Endothelial cell of umbilical vein (primary cell): ENCODE measurements at regions of chr7 and their contacts with region 1.

Region 1: DNA sequence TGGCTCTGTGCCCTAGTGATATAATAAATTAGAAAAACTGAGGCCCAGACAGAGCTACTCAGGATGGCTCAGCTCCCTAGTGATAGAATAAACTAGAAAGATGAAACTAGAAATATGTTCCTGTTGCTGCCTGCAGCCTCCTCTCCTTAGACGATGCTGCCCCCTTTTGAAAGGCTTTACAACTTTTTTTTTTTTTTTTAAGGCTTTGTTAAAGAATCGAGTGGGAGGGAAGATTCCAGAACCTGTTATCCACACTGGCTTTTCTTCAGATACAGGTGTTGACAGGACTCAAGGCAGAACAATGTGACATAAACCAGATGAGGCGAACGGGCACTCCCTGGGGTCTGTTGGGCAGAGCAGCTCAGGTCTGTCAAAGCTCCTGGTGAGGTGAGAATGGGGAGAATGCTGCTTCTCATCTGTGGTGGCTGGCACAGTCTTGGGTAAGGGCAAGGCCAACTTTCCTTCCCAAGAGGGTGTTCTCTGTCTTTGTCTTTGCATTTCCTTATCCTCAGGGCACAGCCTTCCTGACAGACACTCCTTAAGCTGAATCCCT is 175.1 kb downstream of the COBL start:
- DNase-seq: peak; percentile 81
- H3K4me3 ChIP-seq: no peak overlapping the region
- H3K27ac ChIP-seq: no peak overlapping the region
- H3K4me1 ChIP-seq: peaks cover 27% of the 10 kb centered on the region
- H3K27me3 ChIP-seq: peaks cover 0 to 2% of the 10 kb centered on the region in 2 experiments
- CTCF ChIP-seq: peak; percentile 48 to 60
- POLR2A ChIP-seq: no peak

Region 2: DNA sequence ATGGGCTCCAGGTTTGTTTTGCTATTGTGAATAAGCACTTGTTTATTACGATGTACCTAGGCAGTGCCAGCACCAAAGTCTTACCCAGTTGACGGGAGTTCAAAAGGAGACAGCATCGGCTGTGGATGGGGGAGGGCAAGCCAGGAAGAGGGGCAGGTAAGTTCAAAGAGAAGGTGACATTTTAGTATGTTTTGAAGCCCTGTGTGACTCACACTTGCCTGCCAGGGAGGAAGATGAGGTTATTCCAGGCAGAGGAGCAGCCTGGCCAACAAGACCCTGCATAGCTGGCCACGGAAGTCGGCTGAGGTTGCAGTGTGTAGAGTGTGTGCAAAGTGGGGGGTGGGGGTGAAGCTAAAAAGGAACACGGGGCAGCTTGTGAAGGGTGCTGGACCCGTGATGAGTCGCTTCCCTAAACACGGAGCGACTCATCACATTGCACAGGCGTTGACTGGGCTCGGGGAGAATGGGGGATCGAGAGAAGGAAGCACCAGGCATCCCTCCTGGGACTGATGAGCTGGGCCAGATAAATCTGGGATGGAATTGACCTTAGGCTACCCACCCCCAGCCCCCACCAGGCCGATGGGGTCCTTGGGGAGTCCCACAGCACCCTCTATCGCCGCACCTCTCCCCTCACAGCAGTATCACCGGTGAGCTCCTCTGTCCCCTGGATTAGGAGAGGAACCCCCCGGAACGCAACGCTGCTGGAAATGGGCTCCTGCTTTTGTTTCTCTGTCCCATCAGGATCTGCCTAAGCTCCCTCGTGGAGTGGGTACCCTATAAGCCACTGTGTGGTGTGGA is 934.9 kb before region 1 on chr7:
- CTCF ChIA-PET with region 1: interaction called, 58 read pairs
- POLR2A ChIA-PET with region 1: no interaction called
- dilution Hi-C with region 1: no loop called
- intact Hi-C with region 1: loop called (anchors 1 kb)
- DNase-seq: no peak
- H3K4me3 ChIP-seq: no peak overlapping the region
- H3K27ac ChIP-seq: no peak overlapping the region
- H3K4me1 ChIP-seq: no peaks in the 10 kb centered on the region
- H3K27me3 ChIP-seq: no peaks in the 10 kb centered on the region
- CTCF ChIP-seq: no peak
- POLR2A ChIP-seq: no peak

Region 3: GRCh38 chr7:50588937-50589336 is 552.6 kb before region 1 on chr7:
- CTCF ChIA-PET with region 1: interaction called, 17 read pairs
- POLR2A ChIA-PET with region 1: no interaction called
- dilution Hi-C with region 1: no loop called
- intact Hi-C with region 1: no loop called
- DNase-seq: no peak
- H3K4me3 ChIP-seq: no peak overlapping the region
- H3K27ac ChIP-seq: no peak overlapping the region
- H3K4me1 ChIP-seq: no peaks in the 10 kb centered on the region
- H3K27me3 ChIP-seq: no peaks in the 10 kb centered on the region
- CTCF ChIP-seq: peak; percentile 9 to 22
- POLR2A ChIP-seq: no peak

Region 4: DNA sequence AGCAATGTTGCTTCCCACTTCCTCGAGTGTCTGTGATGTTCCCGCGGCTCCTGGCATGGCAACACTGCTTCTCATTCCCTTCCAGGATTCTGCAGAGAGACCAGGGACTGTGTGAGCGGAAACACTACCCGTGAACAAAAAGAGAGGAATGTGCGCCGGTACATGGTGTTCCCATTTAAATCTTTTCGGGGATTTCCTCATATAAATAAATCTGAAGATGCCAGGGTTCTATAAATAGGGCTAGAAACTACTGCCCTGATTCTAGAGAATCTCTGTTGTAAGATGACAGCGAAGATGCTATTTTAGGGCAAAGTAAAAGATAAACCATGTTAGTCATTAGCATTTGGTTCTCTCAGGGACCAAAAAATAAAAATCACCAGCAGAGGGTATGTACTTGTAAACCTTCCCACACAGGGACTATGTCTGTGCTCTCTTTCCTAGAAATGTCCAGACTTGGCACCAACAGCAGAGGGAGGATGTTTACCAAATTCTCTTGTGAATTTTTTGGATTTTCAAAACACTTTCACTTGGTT is 484.1 kb before region 1 on chr7:
- CTCF ChIA-PET with region 1: interaction called, 8 read pairs
- POLR2A ChIA-PET with region 1: no interaction called
- dilution Hi-C with region 1: no loop called
- intact Hi-C with region 1: loop called (anchors 2 kb)
- DNase-seq: peak; percentile 61
- H3K4me3 ChIP-seq: no peak overlapping the region
- H3K27ac ChIP-seq: peak overlapping the region; percentile 5
- H3K4me1 ChIP-seq: peaks cover 20% of the 10 kb centered on the region
- H3K27me3 ChIP-seq: no peaks in the 10 kb centered on the region
- CTCF ChIP-seq: no peak
- POLR2A ChIP-seq: no peak

Region 5: DNA sequence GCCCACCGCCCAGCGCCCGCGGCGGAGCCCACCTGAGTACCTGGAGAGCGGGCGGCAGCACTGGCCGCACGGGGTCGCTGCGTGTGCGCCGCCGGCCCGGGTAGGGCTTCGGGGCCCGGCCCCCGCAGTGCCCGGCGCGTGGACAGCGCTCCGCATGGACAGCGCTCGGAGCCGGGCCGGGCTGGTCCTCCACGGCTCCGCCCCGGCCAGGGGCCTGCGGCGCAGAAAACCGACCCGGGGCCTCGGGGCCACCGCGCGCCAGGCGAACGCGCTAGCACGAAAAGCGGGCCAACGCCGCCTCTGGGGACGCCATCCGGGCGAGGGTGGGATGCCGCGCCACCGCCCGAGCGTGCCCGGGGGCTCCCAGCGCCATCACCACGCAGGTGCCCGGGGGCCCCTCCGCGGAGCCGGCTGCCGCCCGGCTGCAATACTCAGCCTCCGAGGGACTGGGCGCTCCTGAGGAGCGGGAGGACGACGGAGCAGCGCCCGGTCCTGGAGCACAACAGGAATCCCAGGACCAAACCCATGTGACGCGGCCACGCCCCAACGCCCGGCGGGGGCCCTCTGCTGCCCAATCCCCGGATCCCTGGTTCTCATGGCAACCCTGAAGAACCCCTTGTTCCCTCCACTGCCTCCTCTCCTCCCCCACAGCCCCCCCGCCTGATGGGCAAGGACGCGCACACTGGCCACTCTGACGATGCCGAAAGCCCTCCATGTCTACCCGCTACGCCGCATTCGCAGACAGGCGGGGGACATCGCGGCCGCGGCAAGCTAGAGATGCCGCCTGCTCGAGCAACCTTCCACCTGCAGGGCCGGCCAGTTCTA is 358.9 kb before region 1 on chr7 and contains the start of gene GRB10:
- CTCF ChIA-PET with region 1: interaction called, 9 read pairs
- POLR2A ChIA-PET with region 1: no interaction called
- dilution Hi-C with region 1: no loop called
- intact Hi-C with region 1: loop called (anchors 1 kb)
- DNase-seq: peak; percentile 35
- H3K4me3 ChIP-seq: peak within 1 kb of the TSS in 2 of 3 experiments; percentile 25 to 41
- H3K27ac ChIP-seq: no peak within 1 kb of the TSS
- H3K4me1 ChIP-seq: peaks cover 4% of the 10 kb centered on the region
- H3K27me3 ChIP-seq: no peaks in the 10 kb centered on the region
- CTCF ChIP-seq: peak; percentile 12 to 32
- POLR2A ChIP-seq: no peak
- total RNA-seq, gene GRB10: 240 and 243 TPM in 2 replicates

Region 6: DNA sequence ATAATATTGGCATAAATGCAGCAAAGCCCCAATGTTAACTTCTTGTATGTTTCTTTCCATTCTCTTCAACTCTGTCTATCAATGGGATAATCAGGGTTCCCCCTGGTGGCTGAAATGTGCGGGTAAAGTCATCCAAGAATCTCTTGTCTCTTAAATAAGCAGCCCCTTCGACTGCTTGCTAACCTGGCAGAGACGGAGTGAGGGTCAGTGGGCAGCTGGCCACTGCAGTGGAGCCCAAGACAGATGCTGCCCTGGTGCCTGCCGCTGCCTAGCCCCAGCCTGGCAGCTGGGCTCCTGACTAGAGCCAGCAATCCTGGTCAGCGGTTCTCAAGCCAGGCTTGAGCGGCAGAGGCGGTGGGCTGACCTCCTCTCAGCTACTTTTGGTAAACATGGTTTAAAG is 73.8 kb before region 1 on chr7:
- CTCF ChIA-PET with region 1: interaction called, 54 read pairs
- POLR2A ChIA-PET with region 1: no interaction called
- dilution Hi-C with region 1: no loop called
- intact Hi-C with region 1: loop called (anchors 1 kb)
- DNase-seq: peak; percentile 89
- H3K4me3 ChIP-seq: no peak overlapping the region
- H3K27ac ChIP-seq: no peak overlapping the region
- H3K4me1 ChIP-seq: peaks cover 26% of the 10 kb centered on the region
- H3K27me3 ChIP-seq: no peaks in the 10 kb centered on the region
- CTCF ChIP-seq: peak; percentile 69 to 70
- POLR2A ChIP-seq: no peak

Region 7: GRCh38 chr7:51785171-51785570 is 643.6 kb after region 1 on chr7:
- CTCF ChIA-PET with region 1: no interaction called
- POLR2A ChIA-PET with region 1: no interaction called
- dilution Hi-C with region 1: no loop called
- intact Hi-C with region 1: no loop called
- DNase-seq: no peak
- H3K4me3 ChIP-seq: no peak overlapping the region
- H3K27ac ChIP-seq: no peak overlapping the region
- H3K4me1 ChIP-seq: no peaks in the 10 kb centered on the region
- H3K27me3 ChIP-seq: no peaks in the 10 kb centered on the region
- CTCF ChIP-seq: no peak
- POLR2A ChIP-seq: no peak